ENCODE measurements at regions of chr11 and their contacts with region 1.

Region 1: DNA sequence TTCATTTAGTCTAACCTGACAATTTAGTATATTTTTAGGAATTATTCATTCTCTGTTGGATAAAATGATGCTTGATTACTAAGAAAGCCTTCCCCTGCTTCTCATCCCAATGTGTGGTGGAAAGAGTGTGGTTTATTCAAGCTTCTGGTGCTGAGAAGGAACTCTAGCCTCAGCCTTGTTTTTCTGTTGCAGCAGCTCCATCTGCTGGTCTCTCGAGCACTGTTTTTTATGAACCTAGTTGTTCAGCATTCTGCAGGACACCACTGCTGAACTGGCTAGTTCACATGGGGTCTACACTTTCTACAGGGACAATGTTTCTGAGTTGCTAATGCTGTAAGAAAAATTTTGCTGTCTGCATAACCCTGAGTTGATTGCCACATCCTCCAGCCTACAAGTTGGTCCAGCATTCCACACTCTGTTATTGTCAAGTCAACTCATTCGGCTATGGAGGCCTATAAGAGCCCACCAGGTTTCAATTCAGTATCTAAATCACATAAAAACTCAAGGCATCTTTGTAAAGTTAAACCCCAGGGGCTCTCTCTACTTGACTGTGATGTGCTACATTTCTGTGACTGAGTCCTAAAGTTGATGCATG is 14.3 kb downstream of the OR2AG2 start:
- DNase-seq: peak; percentile 55
- H3K4me3 Mint-ChIP-seq: no peak overlapping the region
- H3K27ac Mint-ChIP-seq: no peak overlapping the region
- H3K4me1 Mint-ChIP-seq: no peaks in the 10 kb centered on the region
- H3K27me3 Mint-ChIP-seq: no peaks in the 10 kb centered on the region
- CTCF ChIP-seq: peak; percentile 49

Region 2: DNA sequence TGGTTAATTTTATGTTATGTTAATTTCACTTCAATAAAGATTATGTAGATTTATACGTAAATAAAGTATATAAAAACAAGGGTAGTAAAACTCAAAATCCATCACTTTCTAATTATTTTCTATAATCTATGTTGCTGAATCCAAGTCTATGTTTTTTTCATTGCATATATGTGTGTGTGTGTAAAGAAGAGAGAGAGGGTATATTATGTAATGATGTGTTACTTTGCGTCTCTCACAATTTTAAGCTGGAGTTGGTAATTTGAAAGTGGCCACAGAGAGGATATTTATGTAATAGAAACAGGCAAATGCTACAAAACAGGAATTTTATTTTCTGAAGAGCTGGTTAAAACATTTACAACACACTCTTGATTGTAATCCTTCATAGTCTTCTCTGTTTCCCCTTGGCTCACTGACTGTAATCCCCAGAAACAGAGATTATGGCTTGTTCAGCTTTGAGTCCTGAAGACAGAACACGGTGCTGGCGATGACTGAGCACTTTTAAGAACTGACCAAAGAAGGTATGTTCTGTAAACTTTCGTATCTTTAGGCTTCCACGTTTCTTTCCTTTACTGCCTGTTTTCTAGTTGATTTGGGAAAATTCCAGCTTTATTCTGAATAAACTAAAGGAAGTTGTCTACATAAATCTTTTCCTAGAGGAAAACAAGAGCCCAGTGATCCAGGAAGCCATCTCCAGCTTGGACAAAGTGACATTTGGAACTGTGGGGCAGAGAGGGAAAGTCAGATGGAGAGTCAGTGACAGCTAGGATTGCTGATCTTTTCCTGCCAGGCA is 29.3 kb before region 1 on chr11:
- CTCF ChIA-PET with region 1: interaction called, 13 read pairs
- POLR2A ChIA-PET with region 1: no interaction called
- intact Hi-C with region 1: no loop called
- DNase-seq: no peak
- H3K4me3 Mint-ChIP-seq: no peak overlapping the region
- H3K27ac Mint-ChIP-seq: no peak overlapping the region
- H3K4me1 Mint-ChIP-seq: no peaks in the 10 kb centered on the region
- H3K27me3 Mint-ChIP-seq: peaks cover 56% of the 10 kb centered on the region
- CTCF ChIP-seq: no peak

Region 3: DNA sequence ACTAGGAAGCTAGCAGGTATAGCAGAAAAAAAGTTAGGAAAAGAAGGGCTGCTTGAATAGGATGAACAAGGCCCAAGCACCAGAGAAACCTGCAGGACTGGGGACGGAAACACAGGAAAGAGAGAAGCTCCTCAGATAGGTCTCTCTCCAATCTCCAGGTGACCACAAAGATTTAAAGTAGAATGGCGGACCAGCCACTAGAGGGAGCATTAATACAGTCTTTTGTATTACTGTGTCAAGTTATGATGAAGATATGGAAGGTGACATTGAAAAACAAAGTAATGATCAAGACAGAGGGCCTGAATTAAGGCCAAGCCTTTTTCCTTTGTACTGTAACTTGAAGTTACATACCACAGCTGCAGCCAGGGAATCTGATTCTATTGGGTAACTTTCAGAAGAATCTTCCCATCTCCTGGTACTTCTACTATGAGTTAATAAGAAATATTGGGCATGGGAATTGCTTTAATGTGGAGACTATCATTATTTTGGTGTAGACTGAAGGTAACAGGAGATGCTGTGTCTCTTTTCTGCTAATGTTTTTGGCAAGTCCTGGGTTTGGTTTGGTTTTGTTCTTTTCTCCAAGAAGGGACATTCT is 19.5 kb before region 1 on chr11:
- CTCF ChIA-PET with region 1: interaction called, 96 read pairs
- POLR2A ChIA-PET with region 1: no interaction called
- intact Hi-C with region 1: no loop called
- DNase-seq: peak; percentile 60
- H3K4me3 Mint-ChIP-seq: no peak overlapping the region
- H3K27ac Mint-ChIP-seq: no peak overlapping the region
- H3K4me1 Mint-ChIP-seq: no peaks in the 10 kb centered on the region
- H3K27me3 Mint-ChIP-seq: peaks cover 33% of the 10 kb centered on the region
- CTCF ChIP-seq: peak; percentile 36

Region 4: DNA sequence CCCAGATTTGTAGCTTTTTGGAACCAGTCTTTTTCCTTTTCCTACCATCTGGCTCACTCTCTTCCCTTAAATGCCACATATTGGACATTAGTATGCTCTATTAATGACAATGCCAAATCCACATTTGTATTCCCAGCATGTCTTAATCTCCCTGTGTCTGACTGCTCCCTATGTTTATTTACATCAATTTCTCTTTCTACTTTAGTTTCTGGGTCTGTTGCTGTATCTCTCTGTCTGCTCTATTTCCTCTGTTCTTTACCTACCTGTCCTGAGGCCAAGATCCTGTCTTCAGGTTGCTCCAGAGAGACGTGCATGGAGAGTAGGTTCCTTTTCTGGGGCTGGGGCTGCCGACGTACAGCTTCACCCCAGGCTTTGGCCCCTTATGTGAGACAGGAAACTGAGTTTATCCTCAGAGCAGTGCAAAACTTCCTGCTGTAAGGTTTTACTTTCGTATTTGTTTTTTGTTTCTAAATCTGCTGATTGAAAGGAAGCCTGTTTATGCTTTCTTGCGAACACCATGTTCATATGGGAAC is 11.3 kb before region 1 on chr11:
- CTCF ChIA-PET with region 1: interaction called, 73 read pairs
- POLR2A ChIA-PET with region 1: no interaction called
- intact Hi-C with region 1: no loop called
- DNase-seq: no peak
- H3K4me3 Mint-ChIP-seq: no peak overlapping the region
- H3K27ac Mint-ChIP-seq: no peak overlapping the region
- H3K4me1 Mint-ChIP-seq: no peaks in the 10 kb centered on the region
- H3K27me3 Mint-ChIP-seq: peaks cover 28% of the 10 kb centered on the region
- CTCF ChIP-seq: no peak

Region 5: GRCh38 chr11:6771926-6772893 is 14.7 kb after region 1 on chr11 and contains the start of gene OR2AG2:
- CTCF ChIA-PET with region 1: interaction called, 23 read pairs
- POLR2A ChIA-PET with region 1: no interaction called
- intact Hi-C with region 1: no loop called
- DNase-seq: no peak
- H3K4me3 Mint-ChIP-seq: no peak within 1 kb of the TSS
- H3K27ac Mint-ChIP-seq: no peak within 1 kb of the TSS
- H3K4me1 Mint-ChIP-seq: no peaks in the 10 kb centered on the region
- H3K27me3 Mint-ChIP-seq: no peaks in the 10 kb centered on the region
- CTCF ChIP-seq: no peak
- total RNA-seq, gene OR2AG2: 0.37 and 0.39 TPM in 2 replicates

Region 6: DNA sequence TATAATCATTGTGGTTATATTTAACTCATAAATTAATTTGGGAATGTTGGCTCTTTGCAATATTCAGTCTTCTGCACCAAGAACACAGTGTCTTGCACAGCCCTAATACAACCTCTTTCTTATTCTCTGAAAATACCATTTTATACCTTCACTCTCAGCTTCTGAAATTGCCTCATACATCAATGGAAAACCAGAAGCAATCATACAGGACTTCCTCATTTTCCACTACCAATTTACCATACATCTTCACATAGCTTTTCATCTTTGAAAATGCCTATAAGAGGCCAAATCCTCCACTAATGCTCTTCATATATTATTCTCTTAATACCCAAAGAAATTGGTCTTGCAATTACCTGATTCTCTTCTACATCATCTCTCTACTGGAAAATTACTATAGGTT is 21.0 kb after region 1 on chr11:
- CTCF ChIA-PET with region 1: interaction called, 15 read pairs
- POLR2A ChIA-PET with region 1: no interaction called
- intact Hi-C with region 1: no loop called
- DNase-seq: no peak
- H3K4me3 Mint-ChIP-seq: no peak overlapping the region
- H3K27ac Mint-ChIP-seq: no peak overlapping the region
- H3K4me1 Mint-ChIP-seq: no peaks in the 10 kb centered on the region
- H3K27me3 Mint-ChIP-seq: peaks cover 19% of the 10 kb centered on the region
- CTCF ChIP-seq: no peak